Esophagus squamous epithelium (tissue), 5 donors: ENCODE measurements at regions of chr6 and their contacts with region 1.

Region 1: DNA sequence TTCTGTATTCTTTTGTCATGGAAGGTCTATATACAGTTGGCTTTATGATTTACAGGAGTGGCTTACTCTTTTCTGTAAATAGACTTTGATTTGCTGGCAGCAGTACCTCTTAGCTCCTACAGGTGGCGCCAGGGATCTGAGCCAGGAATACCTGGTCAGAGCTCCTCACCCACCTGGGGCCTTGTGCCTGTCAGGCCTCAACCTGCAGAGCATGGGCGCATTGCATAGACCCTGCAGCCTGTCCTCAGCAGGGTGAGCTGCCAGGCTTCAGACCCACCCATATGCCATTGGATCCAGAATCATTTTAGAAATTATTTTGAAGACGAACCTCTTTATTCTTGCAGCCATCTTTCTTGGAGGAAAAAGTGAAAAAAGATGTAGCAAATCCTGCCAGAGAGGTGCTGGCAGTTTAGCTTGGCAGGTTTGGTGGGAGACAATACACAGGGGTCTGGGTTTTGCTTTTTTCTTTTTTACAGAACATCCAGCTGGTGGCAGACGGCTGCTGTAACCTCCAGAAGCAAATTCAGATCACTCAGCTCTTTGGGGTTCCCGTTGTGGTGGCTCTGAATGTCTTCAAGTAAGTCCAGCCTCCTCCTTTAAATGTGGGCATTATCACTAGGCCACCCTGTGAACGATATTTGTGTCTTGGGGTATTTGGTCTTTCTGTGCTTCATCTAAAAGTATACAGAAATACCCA is 149.1 kb downstream of the MTHFD1L start:
- DNase-seq: no peak
- H3K4me3 ChIP-seq: no peak overlapping the region
- H3K27ac ChIP-seq: no peak overlapping the region
- H3K4me1 ChIP-seq: peaks cover 0 to 17% (median 3%) of the 10 kb centered on the region in 3 donors
- H3K27me3 ChIP-seq: no peaks in the 10 kb centered on the region
- CTCF ChIP-seq: peak; percentile 90 to 99 (median 96)
- POLR2A ChIP-seq: no peak

Region 2: DNA sequence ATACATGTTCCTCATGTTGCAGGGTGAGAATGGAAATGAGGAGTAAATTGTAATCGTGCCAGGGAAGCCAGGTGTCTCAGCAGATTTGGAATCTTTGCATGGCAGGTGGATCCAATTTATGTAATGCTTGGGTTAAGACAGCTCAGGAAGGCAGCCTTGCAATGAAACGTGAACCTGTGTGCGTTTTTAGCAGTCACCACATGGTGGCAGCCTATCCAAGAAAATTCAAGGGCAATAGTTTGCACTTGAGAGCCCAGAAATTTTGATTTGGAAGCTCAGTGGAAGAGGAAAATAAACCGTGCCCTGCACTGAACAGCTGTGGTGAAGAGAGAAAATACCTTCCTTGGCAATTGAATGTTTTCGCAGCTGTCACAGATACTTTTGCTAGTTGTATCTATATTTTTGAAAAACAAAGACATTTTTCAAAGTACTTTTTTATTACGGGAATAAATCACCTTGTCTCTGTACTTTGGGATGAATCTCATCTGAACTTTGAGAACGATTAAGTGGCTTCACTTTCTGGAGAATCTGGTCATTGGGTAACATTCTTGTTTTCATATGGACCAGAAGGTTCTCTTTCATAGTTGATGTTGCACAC is 122.6 kb before region 1 on chr6:
- intact Hi-C with region 1: loop called (anchors 5 kb)
- DNase-seq: no peak
- H3K4me3 ChIP-seq: no peak overlapping the region
- H3K27ac ChIP-seq: peak overlapping the region in 1 of 4 donors; percentile 3
- H3K4me1 ChIP-seq: peaks cover 7 to 22% (median 7%) of the 10 kb centered on the region in 3 donors
- H3K27me3 ChIP-seq: no peaks in the 10 kb centered on the region
- CTCF ChIP-seq: peak; percentile 70 to 89 (median 86)
- POLR2A ChIP-seq: no peak

Region 3: GRCh38 chr6:151323791-151324487 is 309.4 kb after region 1 on chr6:
- intact Hi-C with region 1: loop called (anchors 2 kb)
- DNase-seq: peak; percentile 4
- H3K4me3 ChIP-seq: peak overlapping the region in 1 of 4 donors; percentile 72
- H3K27ac ChIP-seq: peak overlapping the region in 3 of 4 donors; percentile 82 to 89 (median 82)
- H3K4me1 ChIP-seq: peaks cover 12 to 28% (median 22%) of the 10 kb centered on the region in 3 donors
- H3K27me3 ChIP-seq: peaks cover 0 to 23% (median 1%) of the 10 kb centered on the region in 4 donors
- CTCF ChIP-seq: peak; percentile 94 to 99 (median 96)
- POLR2A ChIP-seq: no peak